Mammary epithelial cell (primary cell): ENCODE measurements at regions of chr16 and their contacts with region 1.

Region 1: GRCh38 chr16:65704866-65705265 is 583.0 kb upstream of the CDH11 start:
- DNase-seq: no peak
- H3K4me3 ChIP-seq: no peak overlapping the region
- H3K27ac ChIP-seq: no peak overlapping the region
- H3K4me1 ChIP-seq: no peaks in the 10 kb centered on the region
- H3K27me3 ChIP-seq: no peaks in the 10 kb centered on the region
- CTCF ChIP-seq: peak; percentile 25 to 74

Region 2: DNA sequence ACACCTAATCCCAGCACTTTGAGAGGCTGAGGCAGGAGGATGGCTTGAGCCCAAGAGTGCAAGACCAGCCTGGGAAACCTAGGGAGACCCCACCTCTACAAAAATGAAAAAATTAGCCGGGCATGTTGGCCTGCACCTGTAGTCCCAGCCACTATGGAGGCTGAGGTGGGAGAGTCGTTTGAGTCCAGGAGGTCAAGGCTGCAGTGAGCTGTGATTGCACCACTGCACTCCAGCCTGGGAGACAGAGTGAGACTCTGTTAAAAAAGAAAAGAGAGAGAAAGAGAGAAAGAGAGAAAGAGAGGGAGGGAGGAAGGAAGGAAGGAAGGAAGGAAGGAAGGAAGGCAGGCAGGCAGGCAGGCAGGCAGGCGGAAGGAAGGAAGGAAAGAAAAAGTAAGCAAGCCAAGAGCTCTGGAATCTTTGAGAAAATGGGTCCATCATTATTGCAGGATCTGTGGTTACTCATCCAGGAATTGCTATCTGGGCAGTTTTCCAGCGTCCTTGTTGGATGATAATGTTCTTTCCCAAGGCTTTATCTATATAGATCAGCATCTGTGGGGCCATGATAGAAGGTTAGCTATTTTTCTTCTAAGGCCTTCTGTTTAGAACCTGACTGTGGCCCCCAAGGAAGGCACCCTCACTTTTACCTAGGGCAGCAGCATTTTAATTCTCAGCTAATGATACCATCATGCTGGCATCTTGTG is 128.5 kb after region 1 on chr16:
- CTCF ChIA-PET with region 1: no interaction called
- dilution Hi-C with region 1: no loop called
- in situ Hi-C with region 1: no loop called
- intact Hi-C with region 1: no loop called
- DNase-seq: peak; percentile 3
- H3K4me3 ChIP-seq: no peak overlapping the region
- H3K27ac ChIP-seq: no peak overlapping the region
- H3K4me1 ChIP-seq: peaks cover 4% of the 10 kb centered on the region
- H3K27me3 ChIP-seq: no peaks in the 10 kb centered on the region
- CTCF ChIP-seq: no peak

Region 3: DNA sequence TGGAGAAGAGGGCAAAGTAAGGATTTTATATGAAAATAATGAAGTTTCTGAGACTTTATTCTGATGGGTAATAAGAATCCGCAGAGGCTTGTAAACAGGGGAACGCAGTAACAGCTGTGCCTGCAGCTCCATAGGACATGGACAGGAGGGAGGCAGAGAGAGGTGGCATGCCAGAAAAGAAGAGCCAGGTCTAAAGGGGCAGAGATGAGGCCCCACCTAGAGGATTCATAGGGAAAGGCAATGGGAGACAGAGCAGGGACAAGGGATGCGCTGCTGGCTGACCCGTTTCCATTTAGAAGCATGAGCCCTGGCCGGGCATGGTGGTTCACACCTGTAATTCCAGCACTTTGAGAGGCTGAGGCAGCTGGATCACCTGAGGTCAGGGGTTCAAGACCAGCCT is 321.3 kb after region 1 on chr16:
- CTCF ChIA-PET with region 1: no interaction called
- dilution Hi-C with region 1: no loop called
- in situ Hi-C with region 1: no loop called
- intact Hi-C with region 1: loop called (anchors 1 kb)
- DNase-seq: no peak
- H3K4me3 ChIP-seq: no peak overlapping the region
- H3K27ac ChIP-seq: no peak overlapping the region
- H3K4me1 ChIP-seq: peaks cover 11% of the 10 kb centered on the region
- H3K27me3 ChIP-seq: no peaks in the 10 kb centered on the region
- CTCF ChIP-seq: peak; percentile 38 to 62

Region 4: DNA sequence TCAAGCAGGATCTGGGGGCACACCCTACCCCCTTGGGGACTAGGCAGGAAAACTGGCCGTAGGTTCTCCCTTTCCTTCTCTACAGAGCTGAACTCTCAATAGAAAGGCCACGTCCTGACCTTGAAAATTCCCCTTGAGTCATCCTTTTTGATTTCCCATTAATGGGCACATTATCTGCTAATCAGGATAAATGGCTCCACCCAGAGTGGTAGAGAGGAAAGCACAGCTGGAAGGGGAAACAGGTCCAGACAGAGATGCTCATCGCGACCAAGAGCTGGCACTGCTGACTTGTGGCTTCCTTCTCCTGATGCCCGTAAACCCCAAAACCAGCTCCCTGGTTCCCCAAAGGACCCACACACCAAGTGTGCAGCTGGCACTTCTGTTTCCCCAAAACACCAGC is 455.1 kb after region 1 on chr16:
- CTCF ChIA-PET with region 1: no interaction called
- dilution Hi-C with region 1: no loop called
- in situ Hi-C with region 1: no loop called
- intact Hi-C with region 1: loop called (anchors 5 kb)
- DNase-seq: no peak
- H3K4me3 ChIP-seq: no peak overlapping the region
- H3K27ac ChIP-seq: no peak overlapping the region
- H3K4me1 ChIP-seq: no peaks in the 10 kb centered on the region
- H3K27me3 ChIP-seq: no peaks in the 10 kb centered on the region
- CTCF ChIP-seq: peak in 1 of 2 donors; percentile 37